Left ventricle myocardium superior (tissue), 1 donor: ENCODE measurements at regions of chr12 and their contacts with region 1.

Region 1: DNA sequence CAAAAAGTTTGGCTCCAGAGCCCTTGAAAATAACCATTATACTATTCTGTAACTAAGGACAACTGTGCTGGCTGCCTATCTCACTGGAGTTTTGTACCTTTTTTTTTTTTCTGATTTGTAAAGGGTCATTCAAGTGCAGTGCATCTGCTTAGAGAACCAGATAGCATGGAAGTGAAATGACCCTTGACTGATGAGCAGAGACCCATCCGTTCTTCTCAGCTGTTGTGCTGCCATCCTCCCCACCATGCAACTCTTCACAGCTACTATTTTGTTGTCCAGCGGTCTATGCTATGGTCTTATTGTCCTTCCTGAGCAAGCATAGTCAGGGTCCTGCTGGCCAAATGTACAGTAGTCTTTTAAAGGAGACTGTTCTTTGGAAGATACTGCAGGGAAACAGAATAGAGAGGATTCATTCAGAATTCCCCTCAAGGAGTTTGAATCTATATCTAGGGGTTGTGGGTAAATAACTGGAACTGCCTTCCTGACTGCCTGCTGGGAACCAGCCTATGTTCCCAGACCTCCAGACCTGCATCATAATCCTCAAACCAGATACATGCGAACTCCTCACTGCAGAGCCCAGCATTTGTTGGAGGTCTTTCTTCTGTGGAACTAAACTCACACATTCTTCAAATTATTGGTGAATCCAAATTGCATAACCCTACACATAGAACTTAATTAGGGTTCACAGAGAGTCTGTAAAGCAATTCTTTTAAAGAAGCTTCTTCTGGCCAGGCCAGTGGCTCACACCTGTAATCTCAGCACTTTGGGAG is 41.1 kb downstream of the GPR19 start:
- DNase-seq: no peak
- ATAC-seq: no peak

Region 2: DNA sequence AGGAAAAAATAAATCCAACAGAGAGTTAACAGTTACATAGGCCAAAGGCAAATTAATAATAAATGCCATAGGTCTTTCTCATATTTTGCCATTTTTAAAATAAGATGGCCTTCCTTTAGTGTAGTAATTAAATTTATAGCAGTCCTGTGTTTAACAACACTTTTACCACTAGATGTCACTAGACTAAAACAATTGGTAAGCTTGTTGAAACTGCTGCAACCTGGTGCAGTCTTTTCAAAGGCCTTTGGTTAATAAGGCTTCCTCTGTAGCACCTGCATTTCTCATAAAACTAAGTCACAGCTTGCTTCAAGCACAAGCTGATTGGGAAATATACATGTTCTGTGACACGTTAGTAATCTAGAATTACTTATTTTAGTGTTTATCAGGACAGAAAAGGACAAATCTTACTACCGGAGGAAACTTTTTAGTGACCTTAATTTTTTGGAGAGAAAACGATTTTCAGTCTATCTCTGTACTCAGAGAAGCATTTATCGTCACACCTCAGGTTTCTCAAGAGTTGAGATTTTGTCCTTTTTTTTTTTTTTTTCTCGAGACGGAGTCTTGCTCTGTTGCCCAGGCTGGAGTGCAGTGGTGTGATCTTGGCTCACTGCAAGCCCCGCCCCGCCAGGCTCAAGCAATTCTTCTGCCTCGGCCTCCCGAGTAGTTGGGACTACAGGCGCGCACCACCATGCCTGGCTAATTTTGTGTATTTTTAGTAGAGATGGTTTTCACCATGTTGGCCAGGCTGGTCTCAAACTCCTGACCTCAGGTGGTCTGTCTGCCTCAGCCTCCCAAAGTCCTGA is 278.0 kb before region 1 on chr12:
- intact Hi-C with region 1: loop called (anchors 5 kb)
- DNase-seq: no peak
- ATAC-seq: peak; percentile 86

Region 3: DNA sequence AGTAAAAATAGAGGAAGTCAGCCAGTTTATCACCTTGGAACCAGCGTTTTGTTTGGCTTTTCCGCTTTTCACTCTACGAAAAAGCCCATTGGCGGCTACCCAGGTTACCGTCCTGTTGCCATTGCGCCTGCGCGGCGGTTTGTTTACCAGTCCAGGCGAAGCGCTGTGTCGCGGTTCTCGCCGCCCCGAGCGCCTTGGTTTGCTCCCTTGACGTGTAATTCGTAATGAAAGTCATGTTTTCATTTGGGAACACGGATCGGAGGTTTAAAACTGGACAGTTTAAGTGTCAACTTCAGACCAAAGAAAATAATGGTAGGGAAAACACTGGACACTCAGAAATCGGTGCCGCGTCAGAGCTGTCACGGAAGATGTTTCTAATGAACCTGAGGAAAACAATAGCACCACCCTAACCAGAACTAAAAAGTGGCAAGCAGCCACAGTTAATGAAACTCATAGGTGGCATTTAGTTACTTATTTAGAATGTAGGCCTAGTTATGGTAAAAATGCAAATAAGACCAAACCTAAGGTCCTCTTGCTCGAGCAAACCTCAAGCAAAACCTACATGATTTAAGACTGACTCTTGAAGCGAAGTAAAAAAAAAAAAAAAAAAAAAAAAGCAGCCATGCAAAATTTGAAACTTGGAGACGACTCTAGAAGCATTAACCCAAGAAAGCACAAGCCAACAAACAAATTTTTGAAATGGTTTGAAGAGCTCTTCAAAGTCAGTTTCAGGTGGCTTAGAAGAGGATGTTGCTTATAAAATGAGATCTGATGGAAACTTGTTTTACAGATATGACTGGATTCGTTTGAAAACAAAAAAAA is 41.9 kb after region 1 on chr12:
- intact Hi-C with region 1: loop called (anchors 5 kb)
- DNase-seq: peak; percentile 94
- ATAC-seq: peak; percentile 95

Region 4: DNA sequence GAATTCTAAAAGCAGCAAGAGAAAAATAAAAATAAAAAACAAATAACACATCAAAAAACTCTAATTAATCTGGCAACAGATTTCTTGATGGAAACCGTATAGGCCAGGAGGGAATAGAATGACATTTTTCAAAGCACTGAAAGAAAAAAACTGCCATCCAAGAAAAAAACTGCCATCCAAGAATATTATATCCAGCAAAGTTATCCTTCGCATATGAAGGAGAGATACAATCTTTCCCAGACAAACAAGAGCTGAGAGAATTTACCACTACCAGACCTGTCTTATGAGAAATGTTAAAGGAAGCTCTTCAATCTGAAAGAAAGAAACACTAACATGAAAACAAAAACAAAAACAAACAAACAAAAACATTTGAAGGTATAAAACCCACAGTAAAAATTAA is 756.4 kb after region 1 on chr12:
- intact Hi-C with region 1: no loop called
- DNase-seq: no peak
- ATAC-seq: no peak